K562 (cell line): ENCODE measurements at regions of chr12 and their contacts with region 1.

Region 1: DNA sequence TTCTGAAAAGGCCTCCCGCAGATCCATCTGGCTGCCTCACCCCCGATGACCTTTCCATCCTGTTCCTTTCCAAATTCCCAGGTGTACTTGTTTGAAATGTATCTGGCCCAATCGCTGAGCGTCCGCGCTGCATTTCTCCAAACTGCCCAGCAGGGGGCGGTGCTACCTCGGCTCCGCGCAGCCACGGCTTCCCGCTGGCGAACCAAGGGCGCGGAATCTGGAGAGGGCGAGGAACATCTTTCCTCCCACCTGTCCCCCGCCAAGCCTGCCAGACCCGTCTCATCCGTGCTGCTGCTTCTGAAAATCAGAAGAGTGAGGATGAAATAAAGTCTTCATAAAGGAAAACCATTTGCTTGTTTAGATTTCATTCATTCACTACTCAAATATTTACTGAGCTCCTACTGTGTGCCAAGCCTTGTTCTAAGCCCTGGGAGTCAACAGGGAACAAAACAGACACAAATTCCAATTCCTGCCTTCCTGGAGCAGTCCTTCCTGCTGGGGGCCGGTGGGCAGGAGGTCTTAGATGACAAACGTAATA is 16.8 kb upstream of the MYL2 start:
- DNase-seq: peak; percentile 68 to 79 (median 73)
- ATAC-seq: peak; percentile 88
- H3K4me3 ChIP-seq: no peak overlapping the region
- H3K27ac ChIP-seq: no peak overlapping the region
- H3K4me1 ChIP-seq: peaks cover 0 to 5% of the 10 kb centered on the region in 2 experiments; a peak in 1 of 5 replicates
- H3K27me3 ChIP-seq: peaks cover 0 to 17% of the 10 kb centered on the region in 2 experiments; a peak in 2 of 5 replicates
- CTCF ChIP-seq: peak; percentile 87 to 95 (median 88)
- EP300 ChIP-seq: no peak
- POLR2A ChIP-seq: no peak
- RAD21 ChIP-seq: peak; percentile 64 to 81

Region 2: DNA sequence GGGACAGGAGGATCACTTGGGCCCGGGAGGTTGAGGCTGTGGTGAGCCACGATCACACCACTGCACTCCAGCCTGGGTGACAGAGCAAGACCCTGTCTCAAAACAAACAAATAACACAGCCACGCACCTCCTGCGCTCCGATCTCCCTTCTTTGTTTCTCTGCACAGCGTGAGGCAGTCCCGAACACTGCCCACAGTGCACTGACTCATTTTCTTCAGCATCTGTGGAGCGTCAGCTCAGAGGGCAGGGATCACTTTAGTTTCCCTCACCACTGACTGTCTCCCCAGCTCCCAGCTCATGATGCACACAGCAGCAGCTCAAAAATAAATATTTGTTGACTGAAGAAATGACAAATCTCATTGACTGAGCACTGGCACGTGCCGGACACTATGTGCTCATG is 15.9 kb before region 1 on chr12:
- CTCF ChIA-PET with region 1: no interaction called
- POLR2A ChIA-PET with region 1: no interaction called
- in situ Hi-C with region 1: no loop called
- intact Hi-C with region 1: no loop called
- DNase-seq: no peak
- ATAC-seq: no peak
- H3K4me3 ChIP-seq: no peak overlapping the region
- H3K27ac ChIP-seq: no peak overlapping the region
- H3K4me1 ChIP-seq: no peaks in the 10 kb centered on the region
- H3K27me3 ChIP-seq: peaks cover 12 to 54% of the 10 kb centered on the region in 2 experiments; a peak in 4 of 5 replicates
- CTCF ChIP-seq: no peak
- EP300 ChIP-seq: no peak
- POLR2A ChIP-seq: no peak
- RAD21 ChIP-seq: no peak

Region 3: DNA sequence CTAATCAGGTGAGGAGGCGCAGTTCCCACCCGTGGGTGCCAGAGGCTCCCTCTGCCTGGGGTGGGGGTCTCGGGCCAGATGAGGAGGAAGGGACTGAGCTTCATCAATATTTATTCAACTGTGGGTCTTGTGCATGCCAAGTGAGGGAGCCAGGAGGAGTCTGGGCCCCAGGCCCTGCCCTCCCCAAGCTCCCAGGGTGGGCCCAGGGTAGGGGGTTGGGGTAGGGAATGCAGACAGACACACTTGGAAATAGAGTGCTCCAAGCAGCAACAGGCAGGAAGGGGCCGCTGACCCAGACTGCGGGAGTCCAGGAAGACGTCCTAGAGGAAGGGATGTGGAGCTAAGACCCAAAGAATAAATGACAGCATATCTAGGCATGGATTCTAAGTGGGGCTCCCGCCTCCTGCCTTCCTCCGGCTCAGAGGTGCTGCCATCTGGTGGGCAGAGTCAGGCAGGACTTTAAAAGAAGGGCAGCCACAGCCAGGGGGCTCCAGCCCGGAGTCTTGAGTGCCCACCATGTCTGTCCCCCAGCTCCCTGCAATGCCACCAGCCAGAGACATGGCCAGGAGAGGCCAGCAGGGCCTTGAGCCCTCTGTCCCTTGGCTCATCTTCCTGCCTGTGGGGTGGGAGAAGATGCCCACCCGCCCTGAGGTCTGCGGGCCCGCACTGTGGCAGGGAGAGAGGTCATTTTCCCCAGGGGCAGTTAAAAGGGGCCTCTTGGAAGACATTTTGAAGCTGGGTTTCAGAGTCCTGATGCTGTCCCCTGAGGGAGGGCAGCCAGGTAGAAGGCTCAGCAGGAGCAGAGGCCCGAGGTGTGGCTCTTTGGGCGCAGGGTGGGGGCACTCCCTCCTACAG is 361.6 kb after region 1 on chr12:
- CTCF ChIA-PET with region 1: no interaction called
- POLR2A ChIA-PET with region 1: interaction called, 4 read pairs
- in situ Hi-C with region 1: no loop called
- intact Hi-C with region 1: loop called (anchors 5 kb)
- DNase-seq: peak; percentile 63 to 77 (median 69)
- ATAC-seq: peak; percentile 97
- H3K4me3 ChIP-seq: no peak overlapping the region
- H3K27ac ChIP-seq: no peak overlapping the region
- H3K4me1 ChIP-seq: no peaks in the 10 kb centered on the region
- H3K27me3 ChIP-seq: peaks cover 6 to 15% of the 10 kb centered on the region in 2 experiments; a peak in 3 of 5 replicates
- CTCF ChIP-seq: peak; percentile 83 to 99 (median 95)
- EP300 ChIP-seq: no peak
- POLR2A ChIP-seq: no peak
- RAD21 ChIP-seq: peak in 1 of 2 experiments; percentile 66; a peak in 3 of 4 replicates

Region 4: DNA sequence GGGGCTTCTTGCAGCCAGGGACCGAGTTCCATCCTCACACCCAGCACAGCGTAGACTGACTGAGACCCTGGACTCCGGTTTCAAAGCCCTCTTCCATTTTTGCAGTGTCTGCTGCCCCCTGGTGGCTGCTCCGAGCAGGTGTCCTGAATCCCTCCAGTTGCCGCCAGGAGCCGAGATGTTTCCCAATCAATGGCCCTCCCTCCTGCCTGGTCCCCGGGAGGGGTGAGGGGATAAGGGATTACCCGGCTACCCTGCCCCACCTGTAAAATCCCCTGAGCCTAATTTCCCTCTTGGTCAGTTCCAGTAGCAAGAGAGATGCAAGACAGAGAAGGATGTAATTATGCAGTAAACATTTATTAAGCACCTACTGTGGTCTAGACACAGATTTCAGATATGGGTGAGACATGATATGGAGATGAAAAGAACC is 376.7 kb after region 1 on chr12:
- CTCF ChIA-PET with region 1: interaction called, 14 read pairs
- POLR2A ChIA-PET with region 1: no interaction called
- in situ Hi-C with region 1: loop called (anchors 10 kb)
- intact Hi-C with region 1: loop called (anchors 1 kb)
- DNase-seq: peak; percentile 75 to 90 (median 86)
- ATAC-seq: peak; percentile 93
- H3K4me3 ChIP-seq: no peak overlapping the region
- H3K27ac ChIP-seq: no peak overlapping the region
- H3K4me1 ChIP-seq: peaks cover 0 to 5% of the 10 kb centered on the region in 2 experiments; a peak in 2 of 5 replicates
- H3K27me3 ChIP-seq: peaks cover 14 to 35% of the 10 kb centered on the region in 2 experiments; a peak in 4 of 5 replicates
- CTCF ChIP-seq: peak; percentile 90 to 92 (median 91)
- EP300 ChIP-seq: no peak
- POLR2A ChIP-seq: no peak
- RAD21 ChIP-seq: peak; percentile 64 to 89